ENCODE measurements at regions of chr12 and their contacts with region 1.

Region 1: DNA sequence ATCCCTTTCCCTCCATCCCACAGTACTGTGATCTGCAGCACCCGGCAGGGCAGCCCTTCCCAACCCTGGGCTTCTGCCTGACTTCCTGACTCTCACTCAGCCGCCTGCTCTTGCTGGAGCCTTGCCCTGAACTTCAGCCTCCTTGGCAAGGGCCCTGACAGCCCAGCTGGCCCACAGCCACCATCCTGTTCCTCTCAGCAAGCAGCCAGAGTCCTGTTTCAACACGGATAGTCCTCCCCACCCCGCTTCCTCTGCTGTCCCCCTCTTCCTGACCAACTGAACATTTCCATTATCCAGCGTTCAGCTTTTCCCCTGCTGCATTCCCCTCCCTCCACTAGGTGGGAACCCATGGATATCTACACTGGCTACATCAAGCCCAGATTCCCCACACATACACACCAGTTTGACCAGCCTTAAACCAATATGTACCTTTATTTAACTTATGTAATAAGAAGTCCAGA is 74.0 kb upstream of the MDM1 start:
- DNase-seq: peak; percentile 93 to 95
- ATAC-seq: peak; percentile 96 to 99 (median 98)
- H3K4me3 ChIP-seq: peak overlapping the region in 1 of 10 donors; percentile 25
- H3K27ac ChIP-seq: peak overlapping the region in 9 of 10 donors; percentile 63 to 84 (median 70)
- H3K4me1 ChIP-seq: peaks cover 6 to 36% (median 28%) of the 10 kb centered on the region in 9 donors
- H3K27me3 ChIP-seq: no peaks in the 10 kb centered on the region
- CTCF ChIP-seq: peak in 8 of 9 donors; percentile 14 to 62 (median 48)

Region 2: GRCh38 chr12:68451261-68452077 is 45.3 kb after region 1 on chr12:
- intact Hi-C with region 1: loop called in 4 of 10 experiments (anchors 2 to 10 kb)
- DNase-seq: peak in 1 of 2 donors; percentile 19
- ATAC-seq: peak in 7 of 8 donors; percentile 44 to 77 (median 47)
- H3K4me3 ChIP-seq: peak overlapping the region in 4 of 10 donors; percentile 2 to 24 (median 12)
- H3K27ac ChIP-seq: peak overlapping the region in 7 of 10 donors; percentile 3 to 64 (median 56)
- H3K4me1 ChIP-seq: peaks cover 5 to 75% (median 48%) of the 10 kb centered on the region in 9 donors
- H3K27me3 ChIP-seq: no peaks in the 10 kb centered on the region
- CTCF ChIP-seq: no peak

Region 3: DNA sequence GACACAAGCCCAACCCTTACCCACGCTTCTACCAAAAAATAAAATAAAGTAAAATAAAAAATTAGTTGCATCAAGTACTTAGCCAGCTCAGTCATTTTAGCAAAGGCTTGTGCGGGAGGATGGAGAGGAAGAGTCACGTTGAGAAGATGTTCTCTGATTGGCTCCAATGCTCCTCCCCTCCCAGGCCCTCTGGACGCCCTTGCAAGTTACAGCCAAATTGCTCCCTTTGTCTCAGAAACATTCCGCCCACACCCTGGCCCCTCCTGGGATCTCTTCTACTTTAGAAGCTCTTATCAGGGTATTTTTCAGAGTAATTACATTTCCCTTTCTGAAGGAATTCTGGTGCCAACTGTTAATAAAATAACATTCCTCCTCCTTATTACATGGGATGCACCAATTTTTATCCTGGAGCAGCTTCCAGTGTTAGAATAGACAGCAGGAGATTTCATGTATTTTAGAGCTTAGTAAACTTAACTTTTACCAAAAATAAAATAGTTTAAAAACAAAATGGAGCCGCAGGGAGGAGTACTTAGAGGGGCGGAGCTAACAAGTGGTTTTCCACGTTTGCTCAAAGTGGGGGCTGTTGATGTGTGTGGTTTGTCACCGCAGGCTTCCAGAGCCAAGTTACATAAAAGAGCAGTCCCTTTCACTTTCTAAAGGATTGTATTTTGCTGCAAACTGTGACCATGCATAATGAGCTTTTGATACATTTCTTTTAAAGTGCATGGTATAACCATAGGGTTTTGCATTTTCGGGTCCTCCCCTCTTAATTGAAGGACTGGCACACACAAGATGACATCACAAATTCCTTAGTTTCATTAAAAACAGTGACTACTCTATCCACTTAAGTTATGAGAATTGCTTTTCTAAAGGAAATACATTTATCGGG is 132.8 kb after region 1 on chr12:
- intact Hi-C with region 1: loop called in 1 of 10 experiments (anchors 5 kb)
- DNase-seq: peak; percentile 59 to 83
- ATAC-seq: peak; percentile 84 to 98 (median 95)
- H3K4me3 ChIP-seq: peak overlapping the region in 9 of 10 donors; percentile 1 to 45 (median 31)
- H3K27ac ChIP-seq: peak overlapping the region; percentile 60 to 87 (median 75)
- H3K4me1 ChIP-seq: peaks cover 0 to 25% (median 9%) of the 10 kb centered on the region in 9 donors
- H3K27me3 ChIP-seq: no peaks in the 10 kb centered on the region
- CTCF ChIP-seq: no peak